ENCODE measurements at regions of chr9 and their contacts with region 1.

Region 1: DNA sequence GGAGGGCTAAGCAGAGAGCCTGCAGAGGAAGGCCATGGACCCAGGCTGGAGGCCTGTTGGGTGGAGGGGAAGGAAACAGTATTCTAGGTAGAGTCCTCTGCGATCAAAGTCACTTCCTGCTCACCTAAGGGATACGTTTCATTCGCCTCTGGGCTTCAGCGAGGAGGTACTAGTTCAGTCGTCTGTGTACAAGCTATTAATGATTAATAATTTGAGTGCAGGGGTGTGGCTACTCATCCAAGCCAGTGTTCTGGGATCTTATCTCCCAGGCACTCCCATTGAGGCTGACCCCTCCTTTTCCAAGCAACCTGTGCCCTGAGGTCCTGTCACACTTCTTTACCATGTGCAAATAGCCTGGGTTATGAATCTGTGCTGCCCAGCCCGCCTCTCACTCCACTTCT is 25.2 kb downstream of the RALGPS1 start:
- DNase-seq: no peak
- ATAC-seq: no peak
- H3K4me3 ChIP-seq: no peak overlapping the region
- H3K27ac ChIP-seq: no peak overlapping the region
- H3K4me1 ChIP-seq: no peaks in the 10 kb centered on the region
- H3K27me3 ChIP-seq: no peaks in the 10 kb centered on the region
- CTCF ChIP-seq: no peak
- EP300 ChIP-seq: no peak
- POLR2A ChIP-seq: no peak
- RAD21 ChIP-seq: no peak

Region 2: GRCh38 chr9:126773004-126773607 is 166.7 kb before region 1 on chr9:
- CTCF ChIA-PET with region 1: no interaction called
- POLR2A ChIA-PET with region 1: no interaction called
- RAD21 ChIA-PET with region 1: no interaction called
- SMC1A ChIA-PET with region 1: no interaction called
- in situ Hi-C with region 1: no loop called
- intact Hi-C with region 1: no loop called
- DNase-seq: no peak
- ATAC-seq: peak; percentile 53
- H3K4me3 ChIP-seq: no peak overlapping the region
- H3K27ac ChIP-seq: no peak overlapping the region
- H3K4me1 ChIP-seq: no peaks in the 10 kb centered on the region
- H3K27me3 ChIP-seq: no peaks in the 10 kb centered on the region; a peak in 1 of 4 replicates
- CTCF ChIP-seq: peak; percentile 40 to 48 (median 41)
- EP300 ChIP-seq: no peak
- POLR2A ChIP-seq: no peak
- RAD21 ChIP-seq: peak; percentile 34

Region 3: GRCh38 chr9:126869368-126869767 is 70.5 kb before region 1 on chr9:
- CTCF ChIA-PET with region 1: no interaction called
- POLR2A ChIA-PET with region 1: no interaction called
- RAD21 ChIA-PET with region 1: no interaction called
- SMC1A ChIA-PET with region 1: no interaction called
- in situ Hi-C with region 1: no loop called
- intact Hi-C with region 1: no loop called
- DNase-seq: no peak
- ATAC-seq: no peak
- H3K4me3 ChIP-seq: no peak overlapping the region
- H3K27ac ChIP-seq: no peak overlapping the region
- H3K4me1 ChIP-seq: peaks cover 16% of the 10 kb centered on the region
- H3K27me3 ChIP-seq: no peaks in the 10 kb centered on the region
- CTCF ChIP-seq: no peak
- EP300 ChIP-seq: no peak
- POLR2A ChIP-seq: no peak
- RAD21 ChIP-seq: no peak

Region 4: GRCh38 chr9:126927419-126927818 is 12.4 kb before region 1 on chr9:
- CTCF ChIA-PET with region 1: interaction called, 10 read pairs
- POLR2A ChIA-PET with region 1: no interaction called
- RAD21 ChIA-PET with region 1: no interaction called
- SMC1A ChIA-PET with region 1: interaction called, 6 read pairs
- in situ Hi-C with region 1: no loop called
- intact Hi-C with region 1: no loop called
- DNase-seq: no peak
- ATAC-seq: no peak
- H3K4me3 ChIP-seq: no peak overlapping the region
- H3K27ac ChIP-seq: no peak overlapping the region
- H3K4me1 ChIP-seq: peaks cover 9% of the 10 kb centered on the region; the same call in 1 of the 2 replicates
- H3K27me3 ChIP-seq: no peaks in the 10 kb centered on the region
- CTCF ChIP-seq: no peak
- EP300 ChIP-seq: no peak
- POLR2A ChIP-seq: no peak
- RAD21 ChIP-seq: no peak

Region 5: GRCh38 chr9:127116957-127117356 is 177.1 kb after region 1 on chr9:
- CTCF ChIA-PET with region 1: interaction called, 12 read pairs
- POLR2A ChIA-PET with region 1: no interaction called
- RAD21 ChIA-PET with region 1: interaction called, 3 read pairs
- SMC1A ChIA-PET with region 1: interaction called, 5 read pairs
- in situ Hi-C with region 1: no loop called
- intact Hi-C with region 1: loop called (anchors 5 kb)
- DNase-seq: no peak
- ATAC-seq: peak; percentile 50
- H3K4me3 ChIP-seq: no peak overlapping the region
- H3K27ac ChIP-seq: no peak overlapping the region
- H3K4me1 ChIP-seq: peaks cover 21% of the 10 kb centered on the region
- H3K27me3 ChIP-seq: no peaks in the 10 kb centered on the region
- CTCF ChIP-seq: no peak
- EP300 ChIP-seq: no peak
- POLR2A ChIP-seq: no peak
- RAD21 ChIP-seq: 0 out of 2 replicates have a peak, but pooled peaks have one; percentile 0

Region 6: GRCh38 chr9:127122176-127123063 is 182.6 kb after region 1 on chr9 and contains the start of gene ANGPTL2:
- CTCF ChIA-PET with region 1: interaction called, 12 read pairs
- POLR2A ChIA-PET with region 1: no interaction called
- RAD21 ChIA-PET with region 1: interaction called, 3 read pairs
- SMC1A ChIA-PET with region 1: interaction called, 4 read pairs
- in situ Hi-C with region 1: no loop called
- intact Hi-C with region 1: loop called (anchors 5 kb)
- DNase-seq: no peak
- ATAC-seq: peak; percentile 55
- H3K4me3 ChIP-seq: no peak within 1 kb of the TSS
- H3K27ac ChIP-seq: no peak within 1 kb of the TSS
- H3K4me1 ChIP-seq: peaks cover 16% of the 10 kb centered on the region
- H3K27me3 ChIP-seq: no peaks in the 10 kb centered on the region
- CTCF ChIP-seq: no peak
- EP300 ChIP-seq: no peak
- POLR2A ChIP-seq: no peak
- RAD21 ChIP-seq: no peak
- polyA plus RNA-seq, gene ANGPTL2: 0.13 to 0.38 TPM

Region 7: DNA sequence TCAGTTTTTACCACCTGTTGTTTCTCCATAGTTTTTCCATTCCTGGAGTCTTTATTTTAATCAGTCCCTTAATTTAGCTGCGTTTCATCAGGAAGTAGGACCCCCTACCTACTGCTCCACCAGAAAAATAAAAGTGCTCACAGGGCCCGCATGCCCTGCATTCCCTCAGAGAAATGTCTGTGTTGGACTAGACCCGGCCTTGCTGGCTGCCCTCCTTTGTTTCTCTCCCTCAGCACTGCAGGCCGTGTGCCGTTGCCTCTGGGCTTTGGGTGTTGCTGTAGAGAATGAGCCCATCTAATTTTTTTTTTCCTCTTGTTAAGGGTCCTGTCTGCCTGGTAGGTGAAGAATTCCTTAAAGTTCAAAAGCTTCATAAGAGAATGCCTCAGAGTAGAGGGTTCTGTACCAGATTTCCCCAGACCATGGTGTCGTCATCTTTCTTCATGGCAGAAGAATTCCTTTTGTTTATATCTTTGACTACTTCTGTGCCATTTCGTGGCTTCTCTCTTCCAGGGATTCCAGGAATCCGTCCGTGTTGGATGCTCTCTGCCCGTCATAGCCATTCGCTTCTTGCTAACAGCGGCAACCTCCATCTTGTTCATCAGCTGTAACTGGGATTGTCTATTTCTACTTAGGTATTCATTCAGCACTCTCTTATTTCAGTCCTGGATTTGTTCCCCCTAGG is 232.3 kb after region 1 on chr9:
- CTCF ChIA-PET with region 1: interaction called, 20 read pairs
- POLR2A ChIA-PET with region 1: no interaction called
- RAD21 ChIA-PET with region 1: interaction called, 17 read pairs
- SMC1A ChIA-PET with region 1: interaction called, 30 read pairs
- in situ Hi-C with region 1: no loop called
- intact Hi-C with region 1: loop called (anchors 1 kb)
- DNase-seq: no peak
- ATAC-seq: no peak
- H3K4me3 ChIP-seq: no peak overlapping the region
- H3K27ac ChIP-seq: no peak overlapping the region
- H3K4me1 ChIP-seq: peaks cover 6% of the 10 kb centered on the region
- H3K27me3 ChIP-seq: no peaks in the 10 kb centered on the region
- CTCF ChIP-seq: no peak
- EP300 ChIP-seq: no peak
- POLR2A ChIP-seq: no peak
- RAD21 ChIP-seq: no peak

Region 8: DNA sequence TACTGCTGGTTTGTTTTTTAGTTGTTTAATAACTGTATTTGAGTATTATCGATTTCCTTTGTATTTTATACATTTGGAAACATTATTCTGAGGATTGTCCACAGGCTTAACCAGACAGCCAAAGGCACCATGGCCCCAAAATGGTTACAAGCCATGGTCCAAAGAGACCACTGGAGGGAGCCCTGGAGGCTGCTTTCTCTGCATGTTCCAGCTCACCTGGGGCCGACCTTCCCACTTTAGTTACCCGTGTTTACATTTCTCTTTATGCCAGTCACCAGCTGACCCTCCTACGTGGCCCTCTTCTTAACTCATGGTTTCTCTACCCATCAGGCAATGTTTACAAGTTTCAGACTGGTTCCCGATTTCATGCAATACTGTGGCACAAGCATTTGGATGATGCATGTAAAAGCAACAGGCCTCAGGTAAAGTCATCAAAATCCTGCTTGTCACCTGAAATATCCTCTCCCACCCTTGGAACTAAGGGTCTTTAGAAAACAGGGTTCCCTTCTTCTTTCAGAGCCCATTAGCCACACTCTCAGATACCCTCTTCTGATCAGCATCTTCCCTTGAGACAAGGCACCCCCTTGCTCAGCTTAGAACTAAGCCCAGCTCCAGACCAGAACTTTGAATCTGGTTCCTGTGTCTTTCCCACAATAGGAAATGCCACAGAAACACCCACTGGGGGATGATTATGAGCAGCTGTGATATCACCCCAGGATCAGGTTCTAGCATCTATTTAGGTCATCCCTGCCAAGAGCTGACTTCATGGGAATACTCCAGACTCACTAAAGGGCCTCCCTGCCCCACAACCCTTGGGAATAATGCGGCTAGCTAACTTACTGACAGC is 274.8 kb after region 1 on chr9:
- CTCF ChIA-PET with region 1: interaction called, 25 read pairs
- POLR2A ChIA-PET with region 1: no interaction called
- RAD21 ChIA-PET with region 1: interaction called, 4 read pairs
- SMC1A ChIA-PET with region 1: interaction called, 35 read pairs
- in situ Hi-C with region 1: no loop called
- intact Hi-C with region 1: no loop called
- DNase-seq: no peak
- ATAC-seq: peak; percentile 96
- H3K4me3 ChIP-seq: no peak overlapping the region
- H3K27ac ChIP-seq: no peak overlapping the region
- H3K4me1 ChIP-seq: no peaks in the 10 kb centered on the region
- H3K27me3 ChIP-seq: no peaks in the 10 kb centered on the region
- CTCF ChIP-seq: peak; percentile 85 to 91 (median 86); a peak in 5 of 6 replicates
- EP300 ChIP-seq: no peak
- POLR2A ChIP-seq: no peak
- RAD21 ChIP-seq: peak; percentile 88

Region 9: DNA sequence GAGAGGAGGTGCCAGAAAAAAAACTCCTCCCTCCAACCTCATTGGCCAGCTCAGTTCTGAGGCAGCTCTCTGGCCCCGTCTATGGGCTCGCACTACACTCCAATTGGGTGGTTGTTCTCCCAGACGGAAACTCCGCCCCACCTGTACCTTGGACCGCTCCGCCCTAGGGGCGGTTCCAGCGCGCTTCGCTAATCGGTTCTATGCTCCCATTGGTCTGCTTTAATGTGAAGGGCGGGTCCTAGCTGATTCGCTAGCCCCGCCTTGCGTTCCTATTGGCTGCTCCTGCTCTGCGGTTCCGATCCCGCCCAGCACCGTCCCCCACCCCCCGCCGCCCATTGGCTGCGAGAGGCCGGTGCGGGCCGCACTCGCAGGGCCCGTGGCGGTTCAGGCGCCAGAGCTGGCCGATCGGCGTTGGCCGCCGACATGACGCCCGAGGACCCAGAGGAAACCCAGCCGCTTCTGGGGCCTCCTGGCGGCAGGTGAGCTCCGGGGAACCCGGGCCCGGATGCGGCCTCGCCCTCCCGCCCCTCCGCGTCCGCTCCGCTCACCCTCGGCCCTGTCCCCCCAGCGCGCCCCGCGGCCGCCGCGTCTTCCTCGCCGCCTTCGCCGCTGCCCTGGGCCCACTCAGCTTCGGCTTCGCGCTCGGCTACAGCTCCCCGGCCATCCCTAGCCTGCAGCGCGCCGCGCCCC is 457.1 kb after region 1 on chr9 and contains the start of gene SLC2A8:
- CTCF ChIA-PET with region 1: interaction called, 14 read pairs
- POLR2A ChIA-PET with region 1: no interaction called
- RAD21 ChIA-PET with region 1: interaction called, 10 read pairs
- SMC1A ChIA-PET with region 1: interaction called, 7 read pairs
- in situ Hi-C with region 1: no loop called
- intact Hi-C with region 1: loop called (anchors 5 kb)
- DNase-seq: peak; percentile 99
- ATAC-seq: peak; percentile 95
- H3K4me3 ChIP-seq: peak within 1 kb of the TSS; percentile 89
- H3K27ac ChIP-seq: peak within 1 kb of the TSS; percentile 60
- H3K4me1 ChIP-seq: peaks cover 9% of the 10 kb centered on the region
- H3K27me3 ChIP-seq: no peaks in the 10 kb centered on the region
- CTCF ChIP-seq: peak in 1 of 3 experiments; percentile 15; a peak in 1 of 6 replicates
- EP300 ChIP-seq: no peak
- POLR2A ChIP-seq: peak; percentile 83
- RAD21 ChIP-seq: no peak
- polyA plus RNA-seq, gene SLC2A8: 0.31 to 1.4 TPM

Measured in GM12878 (cell line).